ENCODE measurements at regions of chr20 and their contacts with region 1.

Region 1: DNA sequence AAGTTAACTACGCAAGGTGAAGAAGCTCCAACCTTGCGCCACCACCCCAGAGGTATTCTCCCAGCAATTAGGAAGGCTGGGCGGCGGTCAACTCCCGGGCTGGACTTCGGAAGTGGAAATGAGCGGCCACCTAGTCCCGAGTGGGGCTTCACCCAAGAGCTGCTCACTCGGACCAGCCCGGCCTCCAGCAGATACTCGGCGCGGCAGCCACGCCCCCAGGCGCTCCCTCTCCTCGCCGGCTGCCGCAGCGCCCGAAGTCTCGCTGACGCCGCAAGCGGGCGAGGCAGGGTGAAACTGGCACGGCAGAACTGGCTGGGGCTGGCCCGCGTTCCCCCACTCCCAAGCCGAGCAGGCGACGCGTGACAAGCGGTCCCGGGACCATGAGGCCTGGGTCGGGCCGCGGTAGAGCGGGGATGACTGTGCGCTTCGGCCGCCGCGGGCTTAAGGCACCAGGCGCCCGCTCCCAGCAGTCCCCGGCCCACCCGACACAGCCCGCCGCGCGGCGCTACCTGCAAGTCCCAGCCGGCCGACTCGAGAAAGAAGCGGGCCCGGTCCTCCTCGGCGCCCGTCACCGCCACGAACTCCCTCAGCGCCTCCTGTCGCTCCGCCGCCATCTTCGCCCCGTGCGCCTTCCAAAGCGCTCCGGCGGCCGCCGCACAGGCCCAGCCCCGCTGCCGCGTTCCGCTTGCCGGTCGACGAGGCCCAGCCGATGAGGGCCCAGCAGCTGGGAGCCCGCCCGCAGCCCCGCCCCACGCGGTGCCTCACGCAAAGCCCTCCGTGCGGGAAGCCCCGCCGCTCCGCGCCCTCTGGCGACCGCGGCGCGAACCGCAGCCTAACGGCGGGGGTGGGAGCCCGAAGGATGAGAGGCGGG is at the start of gene NSFL1C:
- DNase-seq: peak; percentile 95 to 99
- H3K4me3 ChIP-seq: peak within 1 kb of the TSS; percentile 92
- H3K4me3 Mint-ChIP-seq: peak within 1 kb of the TSS; percentile 74
- H3K27ac Mint-ChIP-seq: peak within 1 kb of the TSS; percentile 64
- H3K4me1 ChIP-seq: peaks cover 13% of the 10 kb centered on the region
- H3K4me1 Mint-ChIP-seq: peaks cover 34% of the 10 kb centered on the region
- H3K27me3 ChIP-seq: no peaks in the 10 kb centered on the region
- H3K27me3 Mint-ChIP-seq: no peaks in the 10 kb centered on the region
- CTCF ChIP-seq: peak; percentile 94 to 97
- total RNA-seq, gene NSFL1C: 104 and 119 TPM in 2 replicates

Region 2: GRCh38 chr20:1313236-1313964 is 153.0 kb before region 1 on chr20:
- CTCF ChIA-PET with region 1: no interaction called
- POLR2A ChIA-PET with region 1: no interaction called
- intact Hi-C with region 1: loop called (anchors 1 kb)
- DNase-seq: peak; percentile 63 to 75
- H3K4me3 ChIP-seq: no peak overlapping the region
- H3K4me3 Mint-ChIP-seq: no peak overlapping the region
- H3K27ac Mint-ChIP-seq: no peak overlapping the region
- H3K4me1 ChIP-seq: no peaks in the 10 kb centered on the region
- H3K4me1 Mint-ChIP-seq: no peaks in the 10 kb centered on the region
- H3K27me3 ChIP-seq: no peaks in the 10 kb centered on the region
- H3K27me3 Mint-ChIP-seq: no peaks in the 10 kb centered on the region
- CTCF ChIP-seq: peak; percentile 92 to 93

Region 3: GRCh38 chr20:1325173-1326030 is 141.0 kb before region 1 on chr20:
- CTCF ChIA-PET with region 1: no interaction called
- POLR2A ChIA-PET with region 1: no interaction called
- intact Hi-C with region 1: loop called (anchors 1 kb)
- DNase-seq: peak; percentile 97
- H3K4me3 ChIP-seq: peak overlapping the region; percentile 72
- H3K4me3 Mint-ChIP-seq: no peak overlapping the region
- H3K27ac Mint-ChIP-seq: no peak overlapping the region
- H3K4me1 ChIP-seq: peaks cover 31% of the 10 kb centered on the region
- H3K4me1 Mint-ChIP-seq: peaks cover 13% of the 10 kb centered on the region
- H3K27me3 ChIP-seq: no peaks in the 10 kb centered on the region
- H3K27me3 Mint-ChIP-seq: peaks cover 2% of the 10 kb centered on the region
- CTCF ChIP-seq: no peak

Region 4: DNA sequence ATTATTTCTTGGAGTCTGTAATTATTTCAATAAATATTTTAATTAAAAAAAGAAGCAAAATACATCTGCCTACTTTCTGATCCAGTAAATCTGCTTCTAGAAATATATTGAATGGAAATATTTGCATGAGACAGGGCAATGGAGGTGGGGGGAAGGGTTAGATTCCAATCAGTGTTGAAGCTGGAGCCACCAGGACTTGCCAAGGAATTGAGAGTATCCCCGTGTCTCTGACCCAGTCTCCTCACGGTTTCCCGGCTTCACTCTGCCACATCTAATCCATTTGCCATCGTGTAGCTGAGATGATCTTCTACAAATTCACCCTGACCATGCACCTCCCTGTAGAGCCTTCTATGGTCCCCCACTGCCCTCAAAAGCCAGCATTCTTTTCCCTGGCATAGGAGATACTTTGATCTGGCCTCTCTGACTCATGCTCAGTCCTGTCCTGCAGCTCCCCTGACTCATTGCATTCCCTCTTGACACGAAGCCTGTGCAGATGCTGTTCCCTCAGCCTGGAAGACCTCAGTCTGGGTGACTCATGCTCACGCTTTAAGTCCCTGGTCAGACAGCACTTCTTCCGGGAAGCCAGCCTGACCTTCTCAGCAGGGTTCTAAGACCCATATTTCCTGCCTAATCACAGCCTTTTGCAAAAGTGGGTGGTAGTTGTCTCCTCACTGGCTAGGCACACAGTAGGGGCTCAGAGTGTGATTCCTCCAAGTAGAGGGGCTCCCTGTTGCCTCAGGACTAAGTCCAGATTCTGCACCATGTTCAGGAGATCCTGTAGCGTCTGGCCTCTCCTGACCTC is 50.6 kb before region 1 on chr20:
- CTCF ChIA-PET with region 1: no interaction called
- POLR2A ChIA-PET with region 1: no interaction called
- intact Hi-C with region 1: no loop called
- DNase-seq: peak in 1 of 2 experiments; percentile 68
- H3K4me3 ChIP-seq: no peak overlapping the region
- H3K4me3 Mint-ChIP-seq: no peak overlapping the region
- H3K27ac Mint-ChIP-seq: no peak overlapping the region
- H3K4me1 ChIP-seq: no peaks in the 10 kb centered on the region; the same call in 1 of the 2 replicates
- H3K4me1 Mint-ChIP-seq: no peaks in the 10 kb centered on the region
- H3K27me3 ChIP-seq: no peaks in the 10 kb centered on the region
- H3K27me3 Mint-ChIP-seq: no peaks in the 10 kb centered on the region
- CTCF ChIP-seq: no peak

Region 5: GRCh38 chr20:1437235-1437904 is 29.1 kb before region 1 on chr20:
- CTCF ChIA-PET with region 1: interaction called, 3 read pairs
- POLR2A ChIA-PET with region 1: no interaction called
- intact Hi-C with region 1: loop called (anchors 5 kb)
- DNase-seq: peak; percentile 73 to 76
- H3K4me3 ChIP-seq: no peak overlapping the region
- H3K4me3 Mint-ChIP-seq: no peak overlapping the region
- H3K27ac Mint-ChIP-seq: no peak overlapping the region
- H3K4me1 ChIP-seq: no peaks in the 10 kb centered on the region
- H3K4me1 Mint-ChIP-seq: no peaks in the 10 kb centered on the region
- H3K27me3 ChIP-seq: no peaks in the 10 kb centered on the region
- H3K27me3 Mint-ChIP-seq: no peaks in the 10 kb centered on the region
- CTCF ChIP-seq: peak; percentile 83 to 94

Region 6: DNA sequence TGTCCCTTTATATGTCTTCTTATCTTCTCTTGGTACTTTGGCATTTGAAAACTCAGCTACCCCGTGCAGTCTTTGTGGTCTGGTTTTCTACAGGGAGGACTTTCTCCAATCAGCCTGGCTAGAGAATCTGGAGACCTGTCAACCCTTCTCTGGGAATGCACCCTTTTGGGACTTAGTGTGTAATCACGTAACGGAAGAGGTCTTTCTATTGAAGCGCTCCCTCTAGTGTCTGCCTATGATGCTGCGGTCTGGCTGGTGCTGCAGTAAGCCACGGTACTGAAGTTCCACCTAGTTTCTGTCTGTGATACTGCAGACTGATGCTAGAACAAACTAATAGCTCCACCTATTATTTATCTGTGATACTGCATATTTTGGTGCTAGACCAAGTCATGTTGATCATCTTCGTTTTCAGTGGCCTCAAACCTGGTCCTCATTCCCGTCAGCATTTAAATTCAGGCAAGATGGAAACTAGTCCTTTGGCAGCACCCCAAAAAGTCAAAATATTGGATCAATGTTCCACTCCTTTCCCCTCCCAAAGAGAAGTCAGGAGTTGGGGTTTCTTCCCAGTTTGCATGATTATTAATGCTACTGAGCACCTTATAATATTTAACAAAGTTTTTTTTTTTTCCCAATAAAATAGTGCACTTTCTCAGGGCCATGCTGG is 37.2 kb after region 1 on chr20:
- CTCF ChIA-PET with region 1: interaction called, 12 read pairs
- POLR2A ChIA-PET with region 1: no interaction called
- intact Hi-C with region 1: loop called (anchors 1 kb)
- DNase-seq: peak; percentile 88
- H3K4me3 ChIP-seq: no peak overlapping the region
- H3K4me3 Mint-ChIP-seq: no peak overlapping the region
- H3K27ac Mint-ChIP-seq: no peak overlapping the region
- H3K4me1 ChIP-seq: peaks cover 14% of the 10 kb centered on the region
- H3K4me1 Mint-ChIP-seq: peaks cover 18% of the 10 kb centered on the region
- H3K27me3 ChIP-seq: no peaks in the 10 kb centered on the region
- H3K27me3 Mint-ChIP-seq: peaks cover 12% of the 10 kb centered on the region
- CTCF ChIP-seq: peak; percentile 92 to 99

Measured in Caco-2 (cell line).